Natural killer cell (primary cell): ENCODE measurements at regions of chr18 and their contacts with region 1.

Region 1: GRCh38 chr18:77101410-77102258 is 30.9 kb downstream of the MBP start:
- DNase-seq: peak; percentile 56 to 69
- ATAC-seq: peak; percentile 35 to 61 (median 42)
- H3K4me3 ChIP-seq: peak overlapping the region; percentile 1
- H3K4me3 Mint-ChIP-seq: peak overlapping the region; percentile 79
- H3K27ac ChIP-seq: peak overlapping the region; percentile 92
- H3K27ac Mint-ChIP-seq: peak overlapping the region; percentile 87 to 94
- H3K4me1 ChIP-seq: peaks cover 91% of the 10 kb centered on the region
- H3K4me1 Mint-ChIP-seq: peaks cover 92 to 98% of the 10 kb centered on the region in 2 donors
- H3K27me3 ChIP-seq: no peaks in the 10 kb centered on the region
- H3K27me3 Mint-ChIP-seq: no peaks in the 10 kb centered on the region
- CTCF ChIP-seq: no peak

Region 2: DNA sequence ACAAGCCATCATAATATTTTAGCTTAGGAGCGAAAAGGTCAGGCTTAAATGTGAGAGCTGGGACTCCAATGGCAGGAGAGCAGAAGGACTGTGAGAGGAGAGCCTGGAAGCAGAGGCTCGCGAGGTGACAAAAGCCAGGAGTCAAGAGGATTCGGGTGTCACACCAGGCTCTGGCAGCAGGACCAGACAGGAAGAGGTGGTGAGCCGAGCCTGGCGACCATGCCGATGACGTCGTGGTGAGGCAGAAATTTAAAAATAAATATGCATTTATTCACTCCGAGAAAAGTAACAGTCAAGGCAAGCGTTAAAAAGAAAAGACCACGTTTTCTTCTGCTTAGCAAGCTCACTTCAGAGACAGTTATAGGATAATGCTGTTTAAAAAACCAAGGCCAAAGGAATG is 310.5 kb before region 1 on chr18:
- intact Hi-C with region 1: no loop called
- DNase-seq: no peak
- ATAC-seq: no peak
- H3K4me3 ChIP-seq: no peak overlapping the region
- H3K4me3 Mint-ChIP-seq: no peak overlapping the region
- H3K27ac ChIP-seq: no peak overlapping the region
- H3K27ac Mint-ChIP-seq: no peak overlapping the region
- H3K4me1 ChIP-seq: peaks cover 11% of the 10 kb centered on the region
- H3K4me1 Mint-ChIP-seq: peaks cover 14 to 19% of the 10 kb centered on the region in 2 donors
- H3K27me3 ChIP-seq: no peaks in the 10 kb centered on the region
- H3K27me3 Mint-ChIP-seq: peaks cover 16 to 22% of the 10 kb centered on the region in 2 donors
- CTCF ChIP-seq: no peak

Region 3: DNA sequence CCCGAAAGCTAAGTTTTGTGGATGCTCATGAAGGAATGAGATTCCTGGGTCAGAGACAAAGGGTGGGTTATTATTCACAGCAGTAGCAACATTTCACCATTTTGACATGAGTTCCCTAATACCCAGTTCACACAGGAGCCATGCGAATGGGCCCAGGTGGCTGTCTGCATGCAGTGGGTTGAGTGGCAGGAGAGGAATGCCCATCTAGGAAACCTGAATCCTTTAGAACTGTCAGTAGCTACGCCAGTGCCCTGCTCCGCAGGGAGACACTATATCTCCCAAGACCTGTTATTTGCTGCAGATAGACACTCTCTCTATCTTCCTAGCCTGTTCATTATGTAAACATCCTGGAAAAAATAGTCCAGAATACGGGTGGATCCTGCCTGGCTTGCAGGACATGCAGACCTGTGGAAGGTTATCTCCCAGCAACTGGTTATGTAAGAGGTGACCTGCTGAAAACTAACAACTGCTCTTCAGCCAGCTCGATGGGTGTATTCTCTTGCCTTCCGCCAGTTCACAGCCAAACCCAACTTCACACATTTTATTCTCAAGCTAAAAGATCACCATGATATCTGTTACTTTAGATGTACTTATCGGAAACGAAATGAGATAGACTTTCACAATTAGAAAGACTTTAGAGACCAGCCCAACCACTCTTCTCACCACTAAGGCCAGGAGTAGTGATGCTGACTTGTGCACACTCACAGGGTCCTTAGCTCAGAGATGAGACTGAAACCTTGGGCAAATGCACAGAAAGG is 28.1 kb before region 1 on chr18:
- intact Hi-C with region 1: loop called (anchors 1 kb)
- DNase-seq: peak; percentile 39 to 72
- ATAC-seq: peak; percentile 57 to 86 (median 79)
- H3K4me3 ChIP-seq: no peak overlapping the region
- H3K4me3 Mint-ChIP-seq: peak overlapping the region; percentile 70
- H3K27ac ChIP-seq: peak overlapping the region; percentile 93
- H3K27ac Mint-ChIP-seq: peak overlapping the region; percentile 94 to 98
- H3K4me1 ChIP-seq: peaks cover 96% of the 10 kb centered on the region
- H3K4me1 Mint-ChIP-seq: peaks cover 90 to 95% of the 10 kb centered on the region in 2 donors
- H3K27me3 ChIP-seq: no peaks in the 10 kb centered on the region
- H3K27me3 Mint-ChIP-seq: no peaks in the 10 kb centered on the region
- CTCF ChIP-seq: no peak

Region 4: GRCh38 chr18:77114415-77115191 is 13.0 kb after region 1 on chr18:
- intact Hi-C with region 1: loop called (anchors 1 kb)
- DNase-seq: peak; percentile 66 to 71
- ATAC-seq: peak; percentile 74 to 85 (median 80)
- H3K4me3 ChIP-seq: no peak overlapping the region
- H3K4me3 Mint-ChIP-seq: peak overlapping the region; percentile 75
- H3K27ac ChIP-seq: peak overlapping the region; percentile 80
- H3K27ac Mint-ChIP-seq: peak overlapping the region; percentile 87 to 94
- H3K4me1 ChIP-seq: peaks cover 83% of the 10 kb centered on the region
- H3K4me1 Mint-ChIP-seq: peaks cover 90 to 93% of the 10 kb centered on the region in 2 donors
- H3K27me3 ChIP-seq: no peaks in the 10 kb centered on the region
- H3K27me3 Mint-ChIP-seq: no peaks in the 10 kb centered on the region
- CTCF ChIP-seq: no peak

Region 5: DNA sequence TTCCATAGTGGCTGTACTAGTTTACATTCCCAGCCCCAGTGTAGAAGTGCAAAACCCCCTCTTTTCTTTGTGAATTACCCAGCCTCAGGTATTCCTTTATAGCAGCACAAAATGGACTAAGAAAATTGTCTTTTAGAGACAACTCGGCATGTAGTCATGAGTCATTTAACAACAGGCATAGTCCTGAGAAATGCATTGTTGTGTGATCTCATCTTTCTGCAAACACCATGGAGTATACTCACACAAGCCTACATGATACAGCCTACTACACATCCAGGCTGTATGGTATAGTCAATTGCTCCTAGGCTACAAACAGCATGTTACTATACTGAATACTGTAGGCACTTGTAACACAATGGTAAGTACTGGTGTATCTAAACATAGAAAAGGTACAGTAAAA is 75.4 kb after region 1 on chr18:
- intact Hi-C with region 1: no loop called
- DNase-seq: no peak
- ATAC-seq: no peak
- H3K4me3 ChIP-seq: no peak overlapping the region
- H3K4me3 Mint-ChIP-seq: no peak overlapping the region
- H3K27ac ChIP-seq: no peak overlapping the region
- H3K27ac Mint-ChIP-seq: no peak overlapping the region
- H3K4me1 ChIP-seq: no peaks in the 10 kb centered on the region
- H3K4me1 Mint-ChIP-seq: peaks cover 8 to 12% of the 10 kb centered on the region in 2 donors
- H3K27me3 ChIP-seq: no peaks in the 10 kb centered on the region
- H3K27me3 Mint-ChIP-seq: no peaks in the 10 kb centered on the region
- CTCF ChIP-seq: no peak